RWPE1 (cell line): ENCODE measurements at regions of chr1 and their contacts with region 1.

Region 1: GRCh38 chr1:210360852-210361477 is 32.3 kb downstream of the HHAT start:
- DNase-seq: peak; percentile 56
- H3K27ac ChIP-seq: no peak overlapping the region
- CTCF ChIP-seq: peak; percentile 80

Region 2: GRCh38 chr1:210262167-210262896 is 98.6 kb before region 1 on chr1:
- CTCF ChIA-PET with region 1: no interaction called
- POLR2A ChIA-PET with region 1: no interaction called
- DNase-seq: no peak
- H3K27ac ChIP-seq: peak overlapping the region; percentile 59
- CTCF ChIP-seq: no peak

Region 3: GRCh38 chr1:210373885-210374599 is 13.1 kb after region 1 on chr1:
- CTCF ChIA-PET with region 1: interaction called, 11 read pairs
- POLR2A ChIA-PET with region 1: no interaction called
- DNase-seq: peak; percentile 86
- H3K27ac ChIP-seq: no peak overlapping the region
- CTCF ChIP-seq: peak; percentile 78

Region 4: DNA sequence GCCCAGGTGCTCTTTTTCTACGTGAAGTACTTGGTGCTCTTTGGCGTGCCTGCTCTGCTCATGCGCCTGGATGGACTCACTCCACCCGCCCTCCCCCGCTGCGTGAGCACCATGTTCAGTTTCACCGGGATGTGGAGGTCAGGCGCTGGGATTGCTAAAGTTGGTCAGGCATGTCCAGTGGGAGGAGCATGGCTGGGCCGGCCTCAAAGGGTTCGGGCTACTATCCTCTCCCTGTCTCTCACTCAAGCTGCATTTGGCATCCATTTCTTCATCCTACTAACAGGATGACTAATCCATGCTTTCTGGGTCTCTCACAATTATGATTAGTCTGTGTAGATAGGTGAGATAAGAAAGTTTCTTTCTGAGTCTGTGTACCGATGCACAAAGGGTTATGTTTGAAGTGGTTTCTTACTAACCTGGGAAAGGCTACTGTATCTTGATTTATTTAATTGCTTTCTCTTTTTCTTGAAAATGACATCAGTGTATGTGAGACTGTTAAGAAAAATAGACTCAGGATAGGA is 103.6 kb after region 1 on chr1:
- CTCF ChIA-PET with region 1: no interaction called
- POLR2A ChIA-PET with region 1: no interaction called
- DNase-seq: no peak
- H3K27ac ChIP-seq: no peak overlapping the region
- CTCF ChIP-seq: no peak